ENCODE measurements at regions of chr15 and their contacts with region 1.

Region 1: DNA sequence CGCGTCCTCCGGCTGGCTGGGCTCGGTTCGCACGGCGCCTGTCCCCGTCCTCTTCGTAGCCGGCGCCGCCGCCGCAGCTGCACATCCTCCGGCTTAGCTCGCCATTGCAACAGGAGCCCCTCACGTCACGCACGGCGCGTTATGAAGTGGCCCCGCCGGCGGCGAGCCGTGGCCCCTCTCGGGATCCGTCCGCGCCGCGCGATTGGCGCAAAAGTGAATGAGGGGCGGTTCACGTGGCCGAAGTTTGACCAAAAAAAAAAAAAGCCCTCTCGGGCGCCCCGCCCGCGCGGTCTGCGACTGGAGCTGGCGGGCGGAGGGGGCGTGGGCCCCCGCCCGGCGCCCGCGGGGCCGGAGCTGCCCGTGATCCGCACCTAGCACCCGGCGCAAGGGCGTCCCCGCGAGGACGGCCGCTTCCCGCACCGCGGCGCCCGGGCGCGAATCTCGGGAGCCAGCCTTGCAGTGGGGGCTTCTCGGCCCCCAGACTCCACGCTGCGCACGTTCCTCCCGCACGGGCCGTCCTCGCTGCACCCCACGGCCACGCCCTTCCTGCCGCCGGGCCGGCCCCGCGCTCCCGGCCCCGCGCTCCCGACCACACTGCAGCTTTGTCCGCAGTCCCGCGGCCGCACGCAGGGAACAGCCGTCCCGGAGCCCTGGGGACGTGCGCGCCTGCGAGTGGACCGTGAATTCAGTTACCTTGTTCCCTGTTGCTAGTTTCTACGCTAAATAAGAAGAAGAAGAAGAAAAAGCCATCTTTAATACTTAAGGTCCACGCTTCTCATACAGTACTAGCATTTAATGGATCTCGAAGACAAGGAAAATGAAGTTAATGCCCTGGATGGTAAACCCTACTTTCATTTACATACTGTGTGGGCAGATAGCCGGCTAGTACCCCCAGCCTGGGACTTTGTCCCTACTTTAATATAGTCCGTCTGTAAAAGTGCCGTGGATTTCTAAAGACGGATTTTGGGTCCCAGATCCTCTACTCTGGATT is at the start of gene CHSY1:
- DNase-seq: peak; percentile 93
- ATAC-seq: peak; percentile 88
- H3K4me3 Mint-ChIP-seq: peak within 1 kb of the TSS; percentile 95
- H3K27ac Mint-ChIP-seq: peak within 1 kb of the TSS; percentile 92
- H3K4me1 Mint-ChIP-seq: peaks cover 43% of the 10 kb centered on the region
- H3K27me3 Mint-ChIP-seq: no peaks in the 10 kb centered on the region
- CTCF ChIP-seq: no peak
- total RNA-seq, gene CHSY1: 16.5 and 20.4 TPM in 2 replicates

Region 2: GRCh38 chr15:101127506-101128076 is 124.5 kb before region 1 on chr15:
- CTCF ChIA-PET with region 1: interaction called, 19 read pairs
- POLR2A ChIA-PET with region 1: interaction called, 45 read pairs
- intact Hi-C with region 1: loop called (anchors 1 kb)
- DNase-seq: peak; percentile 51
- ATAC-seq: peak; percentile 82
- H3K4me3 Mint-ChIP-seq: peak overlapping the region; percentile 79
- H3K27ac Mint-ChIP-seq: peak overlapping the region; percentile 98
- H3K4me1 Mint-ChIP-seq: peaks cover 75% of the 10 kb centered on the region
- H3K27me3 Mint-ChIP-seq: no peaks in the 10 kb centered on the region
- CTCF ChIP-seq: no peak

Region 3: DNA sequence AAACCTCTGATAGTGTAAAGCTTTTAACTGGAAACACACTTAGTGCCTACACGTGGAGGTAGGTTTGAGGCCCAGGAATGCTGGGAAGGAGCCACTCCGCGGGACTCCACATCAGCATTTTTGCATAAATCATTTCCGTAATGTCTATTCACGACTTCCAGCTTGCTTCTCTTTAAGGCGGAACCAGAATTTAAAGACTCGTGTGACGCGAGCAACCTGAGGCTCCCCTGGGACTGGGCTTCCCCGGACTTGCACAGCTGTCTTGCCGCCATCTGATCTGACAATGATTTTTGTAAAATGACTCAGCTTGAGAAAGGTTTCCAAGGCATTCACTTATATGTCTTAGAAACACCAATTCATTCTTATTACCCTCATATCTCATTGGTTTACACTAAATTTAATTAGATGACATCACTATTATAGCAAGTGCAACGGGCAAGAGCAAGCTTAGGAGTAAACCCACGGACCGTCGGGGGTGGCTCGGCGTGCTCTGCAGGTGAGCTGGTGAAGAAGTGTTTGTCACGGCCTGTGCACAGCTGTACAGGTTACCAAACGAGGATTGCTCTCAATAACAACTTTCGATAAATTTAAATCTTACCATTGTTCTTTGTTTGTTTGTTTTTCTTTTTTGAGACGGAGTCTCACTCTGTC is 95.5 kb before region 1 on chr15:
- CTCF ChIA-PET with region 1: interaction called, 3 read pairs
- POLR2A ChIA-PET with region 1: interaction called, 10 read pairs
- intact Hi-C with region 1: no loop called
- DNase-seq: peak; percentile 56
- ATAC-seq: peak; percentile 92
- H3K4me3 Mint-ChIP-seq: peak overlapping the region; percentile 55
- H3K27ac Mint-ChIP-seq: peak overlapping the region; percentile 25
- H3K4me1 Mint-ChIP-seq: peaks cover 24% of the 10 kb centered on the region
- H3K27me3 Mint-ChIP-seq: no peaks in the 10 kb centered on the region
- CTCF ChIP-seq: no peak

Region 4: GRCh38 chr15:101198800-101199199 is 53.3 kb before region 1 on chr15:
- CTCF ChIA-PET with region 1: no interaction called
- POLR2A ChIA-PET with region 1: no interaction called
- intact Hi-C with region 1: loop called (anchors 5 kb)
- DNase-seq: no peak
- ATAC-seq: no peak
- H3K4me3 Mint-ChIP-seq: no peak overlapping the region
- H3K27ac Mint-ChIP-seq: no peak overlapping the region
- H3K4me1 Mint-ChIP-seq: peaks cover 74% of the 10 kb centered on the region
- H3K27me3 Mint-ChIP-seq: no peaks in the 10 kb centered on the region
- CTCF ChIP-seq: no peak

Region 5: DNA sequence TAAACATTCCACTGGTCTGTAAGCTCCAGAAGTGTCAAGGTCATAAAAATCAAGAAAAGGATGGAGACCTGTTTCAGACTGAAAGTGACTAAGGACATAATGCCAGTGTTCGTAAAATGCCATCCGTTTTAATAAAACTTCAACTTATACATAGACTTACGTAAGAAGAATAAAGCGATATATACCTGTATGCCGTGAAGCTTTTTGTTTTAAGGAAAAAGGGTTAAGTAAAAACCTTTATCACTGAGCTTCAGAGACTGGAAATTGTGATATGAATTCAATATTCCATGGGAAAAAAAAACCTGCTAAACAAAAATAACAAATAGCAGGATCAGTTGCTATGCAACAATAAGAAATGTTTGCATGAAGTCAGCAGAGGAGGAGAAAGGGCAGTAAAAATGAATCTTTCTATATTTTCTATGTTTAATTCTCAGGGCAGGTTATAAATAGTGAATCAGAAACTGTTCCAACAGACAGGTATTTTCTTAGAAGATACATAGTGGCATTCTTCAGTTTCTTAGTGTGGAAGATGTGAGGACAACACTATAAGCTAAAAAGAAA is 42.8 kb before region 1 on chr15:
- CTCF ChIA-PET with region 1: no interaction called
- POLR2A ChIA-PET with region 1: no interaction called
- intact Hi-C with region 1: no loop called
- DNase-seq: no peak
- ATAC-seq: no peak
- H3K4me3 Mint-ChIP-seq: no peak overlapping the region
- H3K27ac Mint-ChIP-seq: no peak overlapping the region
- H3K4me1 Mint-ChIP-seq: peaks cover 53% of the 10 kb centered on the region
- H3K27me3 Mint-ChIP-seq: no peaks in the 10 kb centered on the region
- CTCF ChIP-seq: no peak

Region 6: DNA sequence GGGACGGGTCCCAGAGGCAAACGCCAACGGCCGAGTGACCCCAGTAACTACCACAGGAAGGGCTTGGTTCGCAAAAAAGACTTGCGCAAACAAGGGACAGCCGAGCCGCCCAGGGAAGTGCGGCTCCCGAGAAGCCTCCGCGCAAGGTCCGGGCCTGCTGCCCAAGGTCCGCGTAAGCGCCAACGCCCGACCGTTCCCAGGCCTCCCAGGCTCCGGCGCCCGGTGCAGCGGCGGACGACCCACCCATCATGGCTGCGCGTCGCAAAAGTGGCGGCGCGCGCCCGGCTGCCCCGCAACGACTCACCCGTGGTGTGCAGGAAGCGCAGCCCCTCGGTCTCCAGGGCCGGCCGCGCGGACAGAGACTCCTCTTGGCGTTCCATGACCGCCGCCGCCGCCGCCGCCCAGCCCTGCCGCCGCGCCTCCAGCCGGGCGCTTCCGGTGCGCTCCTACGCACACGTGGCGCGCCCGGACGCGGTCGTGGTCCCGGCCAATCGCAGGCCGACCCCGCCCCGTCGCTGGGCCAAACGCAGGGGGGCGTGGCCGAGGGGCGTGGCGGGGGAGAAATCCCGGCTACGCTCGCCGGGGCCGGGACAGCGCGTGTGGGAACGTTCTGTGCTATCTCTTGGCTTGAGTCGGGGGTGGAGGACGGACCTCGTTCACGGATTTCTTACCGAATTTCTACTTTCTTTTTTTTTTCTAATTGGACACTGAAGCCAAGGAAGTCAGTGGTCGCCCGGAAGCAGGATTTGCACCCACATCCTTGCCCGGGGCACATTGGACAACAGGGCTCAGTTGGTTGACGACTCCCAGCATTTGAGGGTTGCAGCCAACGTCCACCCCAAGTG is 25.1 kb after region 1 on chr15 and contains the start of gene SELENOS:
- CTCF ChIA-PET with region 1: no interaction called
- POLR2A ChIA-PET with region 1: interaction called, 3 read pairs
- intact Hi-C with region 1: loop called (anchors 1 kb)
- DNase-seq: peak; percentile 91
- ATAC-seq: peak; percentile 97
- H3K4me3 Mint-ChIP-seq: peak within 1 kb of the TSS; percentile 90
- H3K27ac Mint-ChIP-seq: peak within 1 kb of the TSS; percentile 70
- H3K4me1 Mint-ChIP-seq: peaks cover 14% of the 10 kb centered on the region
- H3K27me3 Mint-ChIP-seq: no peaks in the 10 kb centered on the region
- CTCF ChIP-seq: no peak
- total RNA-seq, gene SELENOS: 23.7 and 24.5 TPM in 2 replicates

Region 7: GRCh38 chr15:101407439-101407838 is 155.3 kb after region 1 on chr15:
- CTCF ChIA-PET with region 1: no interaction called
- POLR2A ChIA-PET with region 1: no interaction called
- intact Hi-C with region 1: no loop called
- DNase-seq: no peak
- ATAC-seq: peak; percentile 92
- H3K4me3 Mint-ChIP-seq: peak overlapping the region; percentile 29
- H3K27ac Mint-ChIP-seq: no peak overlapping the region
- H3K4me1 Mint-ChIP-seq: peaks cover 59% of the 10 kb centered on the region
- H3K27me3 Mint-ChIP-seq: peaks cover 4% of the 10 kb centered on the region
- CTCF ChIP-seq: no peak

Region 8: GRCh38 chr15:101652098-101652782 is 400.1 kb after region 1 on chr15 and contains the start of gene TM2D3:
- CTCF ChIA-PET with region 1: no interaction called
- POLR2A ChIA-PET with region 1: interaction called, 6 read pairs
- intact Hi-C with region 1: loop called (anchors 1 kb)
- DNase-seq: peak; percentile 99
- ATAC-seq: peak; percentile 87
- H3K4me3 Mint-ChIP-seq: peak within 1 kb of the TSS; percentile 92
- H3K27ac Mint-ChIP-seq: peak within 1 kb of the TSS; percentile 95
- H3K4me1 Mint-ChIP-seq: peaks cover 46% of the 10 kb centered on the region
- H3K27me3 Mint-ChIP-seq: no peaks in the 10 kb centered on the region
- CTCF ChIP-seq: no peak
- total RNA-seq, gene TM2D3: 45.8 and 49.9 TPM in 2 replicates